Naive thymus-derived CD4-positive, alpha-beta T cell (primary cell): ENCODE measurements at regions of chrX and their contacts with region 1.

Region 1: GRCh38 chrX:124406294-124407014 is 60.1 kb downstream of the SH2D1A start:
- DNase-seq: peak in 8 of 9 donors; percentile 21 to 67 (median 56)
- ATAC-seq: peak; percentile 63
- H3K4me3 ChIP-seq: no peak overlapping the region
- H3K4me3 Mint-ChIP-seq: no peak overlapping the region
- H3K27ac ChIP-seq: no peak overlapping the region
- H3K27ac Mint-ChIP-seq: peak overlapping the region in 4 of 9 donors; percentile 26 to 77 (median 60)
- H3K4me1 ChIP-seq: no peaks in the 10 kb centered on the region
- H3K4me1 Mint-ChIP-seq: peaks cover 0 to 21% (median 5%) of the 10 kb centered on the region in 7 donors
- H3K27me3 ChIP-seq: no peaks in the 10 kb centered on the region
- H3K27me3 Mint-ChIP-seq: no peaks in the 10 kb centered on the region

Region 2: GRCh38 chrX:124194901-124195300 is 211.6 kb before region 1 on chrX:
- CTCF ChIA-PET with region 1: no interaction called
- POLR2A ChIA-PET with region 1: no interaction called
- intact Hi-C with region 1: no loop called
- DNase-seq: no peak
- ATAC-seq: no peak
- H3K4me3 ChIP-seq: no peak overlapping the region
- H3K4me3 Mint-ChIP-seq: no peak overlapping the region
- H3K27ac ChIP-seq: no peak overlapping the region
- H3K27ac Mint-ChIP-seq: no peak overlapping the region
- H3K4me1 ChIP-seq: no peaks in the 10 kb centered on the region
- H3K4me1 Mint-ChIP-seq: no peaks in the 10 kb centered on the region
- H3K27me3 ChIP-seq: no peaks in the 10 kb centered on the region
- H3K27me3 Mint-ChIP-seq: no peaks in the 10 kb centered on the region

Region 3: DNA sequence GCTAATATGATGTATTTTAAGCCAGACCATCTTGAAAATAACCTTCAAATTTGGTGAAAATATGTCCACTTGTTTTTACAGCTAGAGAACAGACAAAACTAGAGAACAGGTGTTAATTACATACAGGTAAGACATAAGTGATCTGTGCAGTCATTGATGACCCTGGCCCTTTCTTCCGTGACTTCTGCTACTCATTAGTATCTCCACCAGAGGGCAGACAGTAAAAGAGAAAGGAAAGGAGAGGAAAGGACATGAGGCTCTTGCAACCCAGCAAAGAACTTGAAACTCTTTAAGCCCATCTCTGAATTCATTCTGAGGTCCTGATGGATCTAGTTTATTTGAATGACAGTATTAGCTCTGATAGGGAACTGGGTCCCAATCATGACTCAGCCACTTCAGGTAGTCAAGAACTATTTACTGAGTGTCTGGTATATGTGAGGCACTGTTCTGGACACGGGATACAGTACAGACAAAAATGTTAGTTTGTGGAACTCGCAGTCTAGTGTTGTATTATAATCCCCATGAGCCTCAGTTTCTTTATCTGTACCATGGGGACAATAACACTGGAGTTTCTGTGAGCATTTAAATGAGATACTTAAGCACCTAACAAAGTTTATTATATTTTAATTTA is 195.0 kb before region 1 on chrX:
- CTCF ChIA-PET with region 1: no interaction called
- POLR2A ChIA-PET with region 1: no interaction called
- intact Hi-C with region 1: no loop called
- DNase-seq: peak in 7 of 9 donors; percentile 27 to 63 (median 51)
- ATAC-seq: peak; percentile 83
- H3K4me3 ChIP-seq: no peak overlapping the region
- H3K4me3 Mint-ChIP-seq: no peak overlapping the region
- H3K27ac ChIP-seq: no peak overlapping the region
- H3K27ac Mint-ChIP-seq: peak overlapping the region in 1 of 9 donors; percentile 21
- H3K4me1 ChIP-seq: peaks cover 20 to 31% of the 10 kb centered on the region in 2 donors
- H3K4me1 Mint-ChIP-seq: peaks cover 19 to 51% (median 45%) of the 10 kb centered on the region in 7 donors
- H3K27me3 ChIP-seq: no peaks in the 10 kb centered on the region
- H3K27me3 Mint-ChIP-seq: peaks cover 0 to 3% (median 0%) of the 10 kb centered on the region in 5 donors

Region 4: GRCh38 chrX:124863303-124863702 is 456.8 kb after region 1 on chrX:
- CTCF ChIA-PET with region 1: no interaction called
- POLR2A ChIA-PET with region 1: no interaction called
- intact Hi-C with region 1: loop called in 1 of 2 experiments (anchors 5 kb)
- DNase-seq: no peak
- ATAC-seq: no peak
- H3K4me3 ChIP-seq: no peak overlapping the region
- H3K4me3 Mint-ChIP-seq: no peak overlapping the region
- H3K27ac ChIP-seq: no peak overlapping the region
- H3K27ac Mint-ChIP-seq: no peak overlapping the region
- H3K4me1 ChIP-seq: no peaks in the 10 kb centered on the region
- H3K4me1 Mint-ChIP-seq: no peaks in the 10 kb centered on the region
- H3K27me3 ChIP-seq: no peaks in the 10 kb centered on the region
- H3K27me3 Mint-ChIP-seq: peaks cover 0 to 16% (median 0%) of the 10 kb centered on the region in 5 donors

Region 5: GRCh38 chrX:125132285-125132684 is 725.8 kb after region 1 on chrX:
- CTCF ChIA-PET with region 1: interaction called, 5 read pairs
- POLR2A ChIA-PET with region 1: no interaction called
- intact Hi-C with region 1: loop called (anchors 1 kb)
- DNase-seq: peak in 1 of 9 donors; percentile 2
- ATAC-seq: no peak
- H3K4me3 ChIP-seq: no peak overlapping the region
- H3K4me3 Mint-ChIP-seq: no peak overlapping the region
- H3K27ac ChIP-seq: no peak overlapping the region
- H3K27ac Mint-ChIP-seq: no peak overlapping the region
- H3K4me1 ChIP-seq: no peaks in the 10 kb centered on the region
- H3K4me1 Mint-ChIP-seq: no peaks in the 10 kb centered on the region
- H3K27me3 ChIP-seq: no peaks in the 10 kb centered on the region
- H3K27me3 Mint-ChIP-seq: no peaks in the 10 kb centered on the region

Region 6: GRCh38 chrX:125319646-125320521 is 913.4 kb after region 1 on chrX and contains the start of gene TEX13C:
- CTCF ChIA-PET with region 1: no interaction called
- POLR2A ChIA-PET with region 1: no interaction called
- intact Hi-C with region 1: loop called in 1 of 2 experiments (anchors 5 kb)
- DNase-seq: no peak
- ATAC-seq: no peak
- H3K4me3 ChIP-seq: no peak within 1 kb of the TSS
- H3K4me3 Mint-ChIP-seq: no peak within 1 kb of the TSS
- H3K27ac ChIP-seq: no peak within 1 kb of the TSS
- H3K27ac Mint-ChIP-seq: no peak within 1 kb of the TSS
- H3K4me1 ChIP-seq: no peaks in the 10 kb centered on the region
- H3K4me1 Mint-ChIP-seq: peaks cover 0 to 1% (median 0%) of the 10 kb centered on the region in 7 donors
- H3K27me3 ChIP-seq: no peaks in the 10 kb centered on the region
- H3K27me3 Mint-ChIP-seq: no peaks in the 10 kb centered on the region
- total RNA-seq, gene TEX13C: not detected

Region 7: DNA sequence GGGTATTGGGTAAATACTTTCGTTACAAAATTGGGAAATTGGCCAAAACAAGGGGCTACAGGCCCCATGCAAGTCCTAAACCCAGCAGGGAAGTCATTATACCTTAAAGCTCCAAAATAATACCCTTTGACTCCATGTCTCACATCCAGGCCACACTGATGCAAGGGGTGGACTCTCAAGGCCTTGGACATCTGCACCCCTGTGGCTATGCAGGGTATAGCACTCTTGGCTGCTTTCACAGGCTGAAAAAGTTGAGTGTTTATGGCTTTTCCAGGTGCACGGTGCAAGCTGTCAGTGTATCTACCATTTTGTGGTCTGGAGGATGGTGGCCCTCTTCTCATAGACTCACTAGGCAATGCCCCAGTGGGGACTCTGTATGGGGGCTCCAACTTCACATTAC is 1239.7 kb after region 1 on chrX:
- CTCF ChIA-PET with region 1: no interaction called
- POLR2A ChIA-PET with region 1: no interaction called
- intact Hi-C with region 1: loop called in 1 of 2 experiments (anchors 5 kb)
- DNase-seq: peak in 1 of 9 donors; percentile 1
- ATAC-seq: no peak
- H3K4me3 ChIP-seq: no peak overlapping the region
- H3K4me3 Mint-ChIP-seq: no peak overlapping the region
- H3K27ac ChIP-seq: no peak overlapping the region
- H3K27ac Mint-ChIP-seq: no peak overlapping the region
- H3K4me1 ChIP-seq: no peaks in the 10 kb centered on the region
- H3K4me1 Mint-ChIP-seq: no peaks in the 10 kb centered on the region
- H3K27me3 ChIP-seq: no peaks in the 10 kb centered on the region
- H3K27me3 Mint-ChIP-seq: no peaks in the 10 kb centered on the region